SK-N-SH (cell line): ENCODE measurements at regions of chr14 and their contacts with region 1.

Region 1: DNA sequence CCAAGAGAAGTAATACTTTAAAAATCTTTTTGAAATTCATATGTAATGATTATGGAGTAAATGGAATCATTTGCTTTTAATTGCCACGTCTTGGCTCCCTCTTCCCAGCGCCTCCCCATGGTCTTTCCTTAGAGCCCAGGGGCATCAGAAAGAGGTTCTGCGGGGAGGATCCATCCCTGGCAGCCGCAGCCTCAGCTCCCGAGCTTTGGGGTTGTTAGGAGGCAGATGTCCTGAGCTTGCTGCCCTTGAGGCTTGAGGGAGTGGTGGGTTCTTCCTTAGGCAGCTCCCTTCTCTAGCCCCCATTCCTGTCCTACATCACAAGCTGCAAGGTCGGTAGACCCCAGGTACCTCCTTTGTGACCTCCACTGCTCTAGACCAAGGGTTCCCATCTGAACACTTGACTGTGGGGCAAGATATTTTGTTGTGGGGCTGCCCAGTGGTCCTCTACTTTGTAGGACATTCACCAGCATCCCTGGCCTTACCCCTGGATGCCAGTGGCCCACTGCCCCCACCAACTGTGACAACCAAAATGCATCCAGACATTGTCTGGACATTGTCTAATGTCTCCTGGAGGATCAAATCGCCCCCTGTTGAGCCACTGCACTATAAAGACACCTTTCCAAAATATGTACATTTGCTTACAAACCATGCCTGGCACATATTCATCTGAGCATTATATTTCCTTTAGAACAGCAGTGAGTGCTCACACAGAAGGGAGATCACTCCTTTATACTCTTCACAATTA is 6.3 kb downstream of the PPP2R5C start:
- DNase-seq: no peak
- H3K4me3 ChIP-seq: no peak overlapping the region
- H3K27ac ChIP-seq: peak overlapping the region in 1 of 2 experiments; percentile 28; a peak in 1 of 4 replicates
- H3K4me1 ChIP-seq: peaks cover 0 to 24% of the 10 kb centered on the region in 2 experiments; a peak in 2 of 4 replicates
- H3K27me3 ChIP-seq: no peaks in the 10 kb centered on the region
- CTCF ChIP-seq: no peak
- EP300 ChIP-seq: no peak
- RAD21 ChIP-seq: no peak

Region 2: GRCh38 chr14:101797856-101798255 is 30.1 kb after region 1 on chr14:
- CTCF ChIA-PET with region 1: interaction called, 10 read pairs
- POLR2A ChIA-PET with region 1: no interaction called
- DNase-seq: no peak
- H3K4me3 ChIP-seq: no peak overlapping the region
- H3K27ac ChIP-seq: no peak overlapping the region
- H3K4me1 ChIP-seq: no peaks in the 10 kb centered on the region; a peak in 1 of 4 replicates
- H3K27me3 ChIP-seq: no peaks in the 10 kb centered on the region
- CTCF ChIP-seq: no peak
- EP300 ChIP-seq: no peak
- RAD21 ChIP-seq: no peak

Region 3: DNA sequence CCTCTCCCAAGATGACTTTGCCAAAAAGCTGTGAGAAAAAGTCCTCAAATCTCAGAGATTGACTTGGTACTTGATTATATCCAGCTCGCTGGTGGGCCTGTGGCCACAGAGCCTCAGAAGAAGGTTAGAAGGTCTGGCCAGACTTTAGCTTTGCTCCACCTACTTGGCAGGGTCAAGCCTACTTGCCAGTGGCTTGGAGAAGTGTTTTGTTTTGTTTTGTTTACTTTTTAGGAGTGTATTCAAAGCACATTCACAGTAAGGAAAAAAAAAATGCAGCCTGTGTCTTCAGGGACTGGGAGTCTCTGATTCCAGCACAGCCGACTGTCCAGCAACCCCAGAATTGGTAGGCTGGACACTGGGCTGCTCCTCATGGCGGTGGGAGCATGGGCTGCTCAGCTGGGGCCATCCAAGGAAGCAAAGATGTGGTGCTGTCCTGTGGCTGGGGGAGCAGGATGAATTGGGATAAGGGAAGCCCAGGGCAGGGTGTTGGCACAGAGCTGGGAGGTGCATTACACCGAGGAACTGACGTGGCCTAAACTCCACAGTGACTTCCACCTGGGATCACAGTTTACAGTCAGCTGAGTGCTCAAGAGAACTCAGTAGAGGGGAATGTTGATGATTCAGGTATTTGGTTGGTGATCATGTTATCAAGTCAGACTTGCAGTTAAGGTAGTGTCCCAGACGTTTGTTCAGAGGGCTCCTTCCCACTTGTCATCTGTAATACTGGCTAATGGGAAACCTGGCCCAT is 67.2 kb after region 1 on chr14:
- CTCF ChIA-PET with region 1: interaction called, 14 read pairs
- POLR2A ChIA-PET with region 1: no interaction called
- DNase-seq: no peak
- H3K4me3 ChIP-seq: no peak overlapping the region
- H3K27ac ChIP-seq: peak overlapping the region; percentile 31 to 67; a peak in 2 of 4 replicates
- H3K4me1 ChIP-seq: peaks cover 10 to 63% of the 10 kb centered on the region in 2 experiments
- H3K27me3 ChIP-seq: no peaks in the 10 kb centered on the region
- CTCF ChIP-seq: no peak
- EP300 ChIP-seq: no peak
- RAD21 ChIP-seq: no peak

Region 4: GRCh38 chr14:101889898-101890297 is 122.1 kb after region 1 on chr14:
- CTCF ChIA-PET with region 1: interaction called, 27 read pairs
- POLR2A ChIA-PET with region 1: no interaction called
- DNase-seq: no peak
- H3K4me3 ChIP-seq: no peak overlapping the region
- H3K27ac ChIP-seq: peak overlapping the region in 1 of 2 experiments; percentile 3; a peak in 1 of 4 replicates
- H3K4me1 ChIP-seq: peaks cover 0 to 13% of the 10 kb centered on the region in 2 experiments; a peak in 1 of 4 replicates
- H3K27me3 ChIP-seq: no peaks in the 10 kb centered on the region
- CTCF ChIP-seq: peak; percentile 22; the same call in 1 of the 2 replicates
- EP300 ChIP-seq: no peak
- RAD21 ChIP-seq: peak; percentile 64

Region 5: DNA sequence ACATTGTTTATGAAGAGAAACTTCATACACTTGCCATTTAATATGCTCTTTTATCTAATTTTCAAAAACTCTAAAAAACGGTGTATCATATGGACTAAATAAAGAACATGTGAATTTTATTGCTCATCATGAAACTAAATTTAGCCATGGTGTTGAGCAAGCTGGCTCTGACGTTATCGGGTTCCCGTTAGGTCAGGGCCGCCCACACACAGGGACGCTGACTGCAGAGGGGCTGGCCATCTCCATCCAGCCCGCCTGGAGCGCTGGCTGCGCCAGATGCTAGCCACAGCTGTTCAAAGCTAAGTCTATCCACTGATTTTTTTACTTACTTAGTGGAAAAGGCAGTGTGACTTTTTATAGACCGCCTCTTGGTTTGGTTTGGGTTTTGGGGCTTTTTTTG is 160.1 kb after region 1 on chr14:
- CTCF ChIA-PET with region 1: interaction called, 29 read pairs
- POLR2A ChIA-PET with region 1: no interaction called
- DNase-seq: peak; percentile 93
- H3K4me3 ChIP-seq: no peak overlapping the region
- H3K27ac ChIP-seq: peak overlapping the region; percentile 67 to 72
- H3K4me1 ChIP-seq: peaks cover 0 to 14% of the 10 kb centered on the region in 2 experiments; a peak in 2 of 4 replicates
- H3K27me3 ChIP-seq: no peaks in the 10 kb centered on the region
- CTCF ChIP-seq: no peak
- EP300 ChIP-seq: 0 out of 4 replicates have a peak, but pooled peaks of 1 of the 2 experiments have one; percentile 29
- RAD21 ChIP-seq: 0 out of 2 replicates have a peak, but pooled peaks have one; percentile 30

Region 6: DNA sequence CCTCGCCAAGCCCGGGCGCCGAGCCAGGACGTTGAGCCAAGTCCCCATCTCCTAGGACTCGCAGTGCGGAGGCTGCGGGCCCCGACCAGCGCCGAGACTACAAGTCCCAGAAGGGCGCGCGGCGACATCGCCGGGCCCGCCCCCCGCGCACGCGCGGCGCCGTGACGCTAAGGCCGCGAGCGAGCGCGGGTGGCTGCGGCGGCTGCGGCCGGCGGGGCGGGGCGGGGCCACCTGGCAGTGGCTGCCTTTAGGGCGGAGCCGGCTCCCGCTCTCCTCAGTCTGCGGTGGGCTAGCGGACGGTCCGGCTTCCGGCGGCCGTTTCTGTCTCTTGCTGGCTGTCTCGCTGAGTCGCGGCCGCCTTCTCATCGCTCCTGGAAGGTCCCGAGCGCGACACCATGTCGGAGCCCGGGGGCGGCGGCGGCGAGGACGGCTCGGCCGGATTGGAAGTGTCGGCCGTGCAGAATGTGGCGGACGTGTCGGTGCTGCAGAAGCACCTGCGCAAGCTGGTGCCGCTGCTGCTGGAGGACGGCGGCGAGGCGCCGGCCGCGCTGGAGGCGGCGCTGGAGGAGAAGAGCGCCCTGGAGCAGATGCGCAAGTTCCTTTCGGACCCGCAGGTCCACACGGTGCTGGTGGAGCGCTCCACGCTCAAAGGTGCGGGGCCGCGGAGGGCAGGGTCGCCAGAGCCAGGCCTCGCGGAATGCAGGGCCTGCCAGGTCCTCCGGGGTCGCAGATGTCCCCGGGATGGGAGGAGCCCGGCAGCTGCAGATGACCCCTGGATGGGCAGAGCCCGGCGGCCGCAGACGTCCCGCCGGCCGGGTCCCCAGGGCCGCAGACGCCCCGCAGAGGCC is 196.7 kb after region 1 on chr14 and contains the start of gene DYNC1H1:
- CTCF ChIA-PET with region 1: interaction called, 22 read pairs
- POLR2A ChIA-PET with region 1: no interaction called
- DNase-seq: peak; percentile 96
- H3K4me3 ChIP-seq: peak within 1 kb of the TSS; percentile 90 to 97
- H3K27ac ChIP-seq: peak within 1 kb of the TSS; percentile 83 to 92
- H3K4me1 ChIP-seq: peaks cover 22 to 37% of the 10 kb centered on the region in 2 experiments; a peak in 3 of 4 replicates
- H3K27me3 ChIP-seq: no peaks in the 10 kb centered on the region
- CTCF ChIP-seq: no peak
- EP300 ChIP-seq: no peak
- RAD21 ChIP-seq: no peak
- polyA plus RNA-seq, gene DYNC1H1: 110 and 140 TPM in 2 replicates